ENCODE measurements at regions of chr17 and their contacts with region 1.

Region 1: GRCh38 chr17:28763804-28764266 is 20.0 kb downstream of the TRAF4 start:
- DNase-seq: peak; percentile 93
- H3K4me3 Mint-ChIP-seq: no peak overlapping the region
- H3K27ac Mint-ChIP-seq: no peak overlapping the region
- H3K4me1 Mint-ChIP-seq: peaks cover 12% of the 10 kb centered on the region
- H3K27me3 Mint-ChIP-seq: no peaks in the 10 kb centered on the region

Region 2: DNA sequence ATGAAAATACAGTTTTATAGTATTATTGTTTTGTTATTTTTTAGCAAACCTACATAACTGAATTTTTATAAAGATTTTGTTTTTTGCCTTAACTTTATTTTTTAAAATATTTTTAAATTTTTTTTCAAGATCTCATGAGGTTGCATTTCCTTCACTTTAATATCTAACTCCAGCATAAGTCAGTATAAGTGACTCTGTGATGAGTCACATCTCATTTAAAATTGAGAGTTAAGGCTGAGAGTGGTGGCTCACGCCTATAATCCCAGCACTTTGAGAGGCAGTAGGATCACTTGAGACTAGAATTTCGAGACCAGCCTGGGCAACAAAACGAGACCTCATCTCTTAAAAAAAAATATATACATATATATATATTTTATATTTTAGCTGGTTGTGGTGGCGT is 677.3 kb before region 1 on chr17:
- CTCF ChIA-PET with region 1: no interaction called
- intact Hi-C with region 1: no loop called
- DNase-seq: no peak
- H3K4me3 Mint-ChIP-seq: no peak overlapping the region
- H3K27ac Mint-ChIP-seq: no peak overlapping the region
- H3K4me1 Mint-ChIP-seq: peaks cover 18% of the 10 kb centered on the region
- H3K27me3 Mint-ChIP-seq: no peaks in the 10 kb centered on the region

Region 3: DNA sequence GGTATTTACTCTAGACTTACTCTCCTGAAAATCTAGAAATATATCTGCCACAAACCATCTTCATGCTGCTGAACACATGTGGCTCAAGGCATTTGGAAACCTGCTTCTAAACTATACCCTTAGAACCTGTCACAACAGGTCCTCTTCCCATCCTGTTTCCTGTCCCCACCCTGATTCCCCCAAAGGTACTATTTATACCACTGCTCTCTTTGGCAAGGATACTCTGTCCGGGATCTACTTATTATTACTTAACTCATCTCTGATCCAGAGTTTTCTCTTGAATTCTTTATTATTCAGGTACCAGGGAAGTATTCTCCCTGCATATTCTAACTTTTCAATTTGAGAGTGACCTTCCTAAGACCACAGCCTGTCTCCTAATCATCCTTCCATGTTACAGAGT is 13.3 kb after region 1 on chr17:
- CTCF ChIA-PET with region 1: interaction called, 61 read pairs
- intact Hi-C with region 1: no loop called
- DNase-seq: no peak
- H3K4me3 Mint-ChIP-seq: no peak overlapping the region
- H3K27ac Mint-ChIP-seq: peak overlapping the region; percentile 6
- H3K4me1 Mint-ChIP-seq: peaks cover 31% of the 10 kb centered on the region
- H3K27me3 Mint-ChIP-seq: no peaks in the 10 kb centered on the region

Region 4: GRCh38 chr17:28828294-28829040 is 64.6 kb after region 1 on chr17:
- CTCF ChIA-PET with region 1: interaction called, 20 read pairs
- intact Hi-C with region 1: no loop called
- DNase-seq: no peak
- H3K4me3 Mint-ChIP-seq: no peak overlapping the region
- H3K27ac Mint-ChIP-seq: no peak overlapping the region
- H3K4me1 Mint-ChIP-seq: peaks cover 2% of the 10 kb centered on the region
- H3K27me3 Mint-ChIP-seq: no peaks in the 10 kb centered on the region

Region 5: GRCh38 chr17:28871056-28871579 is 107.3 kb after region 1 on chr17:
- CTCF ChIA-PET with region 1: interaction called, 12 read pairs
- intact Hi-C with region 1: no loop called
- DNase-seq: peak; percentile 85
- H3K4me3 Mint-ChIP-seq: no peak overlapping the region
- H3K27ac Mint-ChIP-seq: peak overlapping the region; percentile 85
- H3K4me1 Mint-ChIP-seq: peaks cover 26% of the 10 kb centered on the region
- H3K27me3 Mint-ChIP-seq: no peaks in the 10 kb centered on the region

Region 6: GRCh38 chr17:28896884-28897768 is 133.3 kb after region 1 on chr17 and contains the start of gene FLOT2:
- CTCF ChIA-PET with region 1: interaction called, 19 read pairs
- intact Hi-C with region 1: no loop called
- DNase-seq: peak; percentile 88
- H3K4me3 Mint-ChIP-seq: peak within 1 kb of the TSS; percentile 94
- H3K27ac Mint-ChIP-seq: peak within 1 kb of the TSS; percentile 93
- H3K4me1 Mint-ChIP-seq: peaks cover 72% of the 10 kb centered on the region
- H3K27me3 Mint-ChIP-seq: no peaks in the 10 kb centered on the region
- total RNA-seq, gene FLOT2: 66.0 to 71.5 TPM

Region 7: DNA sequence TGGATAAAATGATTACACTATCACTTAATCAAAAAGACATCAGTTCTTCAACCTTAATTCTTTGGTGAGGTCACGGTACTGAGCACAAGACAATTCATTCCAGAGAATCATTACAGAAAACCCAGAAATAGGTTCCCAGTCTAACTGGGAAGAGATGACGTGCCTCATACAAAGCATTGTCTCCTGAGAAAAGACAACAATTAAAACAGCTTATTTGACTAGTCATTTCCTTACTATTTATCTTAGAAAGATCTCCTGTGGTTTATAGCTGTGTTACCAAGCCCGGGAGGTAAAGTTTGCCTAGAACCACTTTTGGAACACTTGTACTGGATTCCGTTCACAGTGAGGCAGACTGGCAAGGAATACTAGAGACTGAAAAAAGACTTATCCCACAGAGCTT is 182.4 kb after region 1 on chr17:
- CTCF ChIA-PET with region 1: interaction called, 26 read pairs
- intact Hi-C with region 1: no loop called
- DNase-seq: no peak
- H3K4me3 Mint-ChIP-seq: no peak overlapping the region
- H3K27ac Mint-ChIP-seq: peak overlapping the region; percentile 59
- H3K4me1 Mint-ChIP-seq: peaks cover 72% of the 10 kb centered on the region
- H3K27me3 Mint-ChIP-seq: no peaks in the 10 kb centered on the region

Region 8: GRCh38 chr17:29005936-29006511 is 242.2 kb after region 1 on chr17 and contains the start of gene SEZ6:
- CTCF ChIA-PET with region 1: no interaction called
- intact Hi-C with region 1: no loop called
- DNase-seq: peak; percentile 82
- H3K4me3 Mint-ChIP-seq: no peak within 1 kb of the TSS
- H3K27ac Mint-ChIP-seq: no peak within 1 kb of the TSS
- H3K4me1 Mint-ChIP-seq: no peaks in the 10 kb centered on the region
- H3K27me3 Mint-ChIP-seq: peaks cover 48% of the 10 kb centered on the region
- total RNA-seq, gene SEZ6: not detected